ENCODE measurements at regions of chr20 and their contacts with region 1.

Region 1: GRCh38 chr20:35699127-35699975 is at the starts of genes NFS1 and ROMO1:
- DNase-seq: peak; percentile 87
- H3K4me3 Mint-ChIP-seq: peak within 1 kb of the TSS; percentile 91
- H3K27ac Mint-ChIP-seq: peak within 1 kb of the TSS; percentile 77
- H3K4me1 Mint-ChIP-seq: peaks cover 56% of the 10 kb centered on the region
- H3K27me3 Mint-ChIP-seq: no peaks in the 10 kb centered on the region
- total RNA-seq, gene NFS1: 28.3 to 30.8 TPM
- total RNA-seq, gene ROMO1: 98.4 to 114 TPM

Region 2: GRCh38 chr20:35432430-35432735 is 267.0 kb before region 1 on chr20:
- CTCF ChIA-PET with region 1: no interaction called
- POLR2A ChIA-PET with region 1: no interaction called
- DNase-seq: no peak
- H3K4me3 Mint-ChIP-seq: no peak overlapping the region
- H3K27ac Mint-ChIP-seq: no peak overlapping the region
- H3K4me1 Mint-ChIP-seq: peaks cover 4% of the 10 kb centered on the region
- H3K27me3 Mint-ChIP-seq: no peaks in the 10 kb centered on the region

Region 3: GRCh38 chr20:35454881-35455609 is 244.3 kb before region 1 on chr20 and contains the start of gene CEP250:
- CTCF ChIA-PET with region 1: no interaction called
- POLR2A ChIA-PET with region 1: no interaction called
- DNase-seq: peak; percentile 94
- H3K4me3 Mint-ChIP-seq: peak within 1 kb of the TSS; percentile 87
- H3K27ac Mint-ChIP-seq: peak within 1 kb of the TSS; percentile 95
- H3K4me1 Mint-ChIP-seq: peaks cover 29% of the 10 kb centered on the region
- H3K27me3 Mint-ChIP-seq: no peaks in the 10 kb centered on the region
- total RNA-seq, gene CEP250: 70.3 to 71.2 TPM

Region 4: GRCh38 chr20:35711588-35712209 is 12.3 kb after region 1 on chr20:
- CTCF ChIA-PET with region 1: interaction called, 6 read pairs
- POLR2A ChIA-PET with region 1: interaction called, 112 read pairs
- DNase-seq: no peak
- H3K4me3 Mint-ChIP-seq: peak overlapping the region; percentile 36
- H3K27ac Mint-ChIP-seq: peak overlapping the region; percentile 64
- H3K4me1 Mint-ChIP-seq: peaks cover 52% of the 10 kb centered on the region
- H3K27me3 Mint-ChIP-seq: no peaks in the 10 kb centered on the region

Region 5: DNA sequence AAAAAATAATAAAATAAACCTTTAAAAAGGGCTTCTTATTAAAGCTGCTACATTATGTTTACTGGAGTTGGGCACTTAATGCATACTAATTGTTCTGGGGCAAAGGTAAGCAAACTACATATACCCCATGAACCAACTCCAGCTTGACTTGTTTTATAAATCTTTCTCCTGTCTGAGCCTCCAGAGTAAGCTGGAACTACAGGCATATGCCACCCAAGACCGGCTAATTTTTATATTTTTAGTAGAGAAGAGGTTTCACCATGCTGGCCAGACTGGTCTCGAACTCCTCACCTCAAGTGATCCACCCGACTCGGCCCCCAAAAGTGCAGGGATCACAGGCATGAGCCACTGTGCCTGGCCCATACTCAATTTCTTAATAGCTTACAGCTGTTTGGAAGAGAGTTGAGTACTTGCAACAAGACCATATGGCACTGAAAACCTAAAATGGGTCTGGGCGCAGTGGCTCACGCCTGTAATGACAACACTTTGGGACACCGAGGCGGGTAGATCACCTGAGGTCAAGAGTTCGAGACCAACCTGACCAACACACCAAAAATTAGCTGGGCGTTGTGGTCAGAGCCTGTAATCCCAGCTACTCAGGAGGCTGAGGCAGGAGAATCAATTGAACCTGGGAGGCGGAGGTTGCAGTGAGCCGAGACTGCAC is 19.8 kb after region 1 on chr20:
- CTCF ChIA-PET with region 1: interaction called, 3 read pairs
- POLR2A ChIA-PET with region 1: interaction called, 112 read pairs
- DNase-seq: no peak
- H3K4me3 Mint-ChIP-seq: no peak overlapping the region
- H3K27ac Mint-ChIP-seq: no peak overlapping the region
- H3K4me1 Mint-ChIP-seq: peaks cover 49% of the 10 kb centered on the region
- H3K27me3 Mint-ChIP-seq: no peaks in the 10 kb centered on the region

Measured in activated CD4-positive, alpha-beta memory T cell treated with anti-CD3 and anti-CD28 coated beads, Interleukin-2, amount 10 ng/mL, durations not matched to agents 7 days and 5 days (primary cell).